Activated CD4-positive, alpha-beta memory T cell treated with anti-CD3 and anti-CD28 coated beads for 36 hours (primary cell): ENCODE measurements at regions of chr5 and their contacts with region 1.

Region 1: GRCh38 chr5:53069626-53070025 is 39.9 kb downstream of the MOCS2 start:
- DNase-seq: peak; percentile 86
- H3K4me3 Mint-ChIP-seq: no peak overlapping the region
- H3K27ac Mint-ChIP-seq: peak overlapping the region; percentile 10
- H3K4me1 Mint-ChIP-seq: peaks cover 18% of the 10 kb centered on the region
- H3K27me3 Mint-ChIP-seq: peaks cover 7% of the 10 kb centered on the region

Region 2: DNA sequence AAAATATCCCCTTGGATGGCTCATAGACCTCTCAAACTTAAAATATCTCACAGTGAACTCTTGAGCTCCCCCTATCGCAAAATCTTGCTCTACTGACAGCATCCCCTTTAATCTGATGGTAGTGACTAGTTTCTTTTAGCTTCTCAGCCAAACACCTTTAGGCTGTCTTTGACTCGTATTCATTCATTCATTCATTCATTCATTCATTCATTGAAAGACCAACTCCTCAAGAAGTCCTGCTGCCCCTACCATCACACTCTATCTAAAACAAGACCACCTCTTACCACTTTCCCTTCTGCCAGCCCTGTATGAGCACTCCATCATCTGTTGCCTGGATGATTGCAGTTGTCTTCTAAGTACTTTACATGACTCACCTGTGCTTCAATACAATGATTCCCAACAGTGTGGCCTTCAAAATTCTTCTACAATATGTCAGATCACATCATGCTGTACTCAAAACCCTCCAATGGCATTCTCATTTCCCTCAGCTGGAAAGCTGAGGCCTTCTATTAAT is 33.7 kb before region 1 on chr5:
- CTCF ChIA-PET with region 1: interaction called, 10 read pairs
- POLR2A ChIA-PET with region 1: interaction called, 10 read pairs
- intact Hi-C with region 1: loop called (anchors 1 kb)
- DNase-seq: no peak
- H3K4me3 Mint-ChIP-seq: no peak overlapping the region
- H3K27ac Mint-ChIP-seq: no peak overlapping the region
- H3K4me1 Mint-ChIP-seq: peaks cover 38% of the 10 kb centered on the region
- H3K27me3 Mint-ChIP-seq: peaks cover 5% of the 10 kb centered on the region

Region 3: GRCh38 chr5:53041071-53041692 is 28.4 kb before region 1 on chr5:
- CTCF ChIA-PET with region 1: interaction called, 10 read pairs
- POLR2A ChIA-PET with region 1: interaction called, 10 read pairs
- intact Hi-C with region 1: loop called (anchors 1 kb)
- DNase-seq: peak; percentile 32
- H3K4me3 Mint-ChIP-seq: peak overlapping the region; percentile 25
- H3K27ac Mint-ChIP-seq: no peak overlapping the region
- H3K4me1 Mint-ChIP-seq: peaks cover 42% of the 10 kb centered on the region
- H3K27me3 Mint-ChIP-seq: peaks cover 7% of the 10 kb centered on the region